HEK293 (cell line): ENCODE measurements at regions of chr19 and their contacts with region 1.

Region 1: DNA sequence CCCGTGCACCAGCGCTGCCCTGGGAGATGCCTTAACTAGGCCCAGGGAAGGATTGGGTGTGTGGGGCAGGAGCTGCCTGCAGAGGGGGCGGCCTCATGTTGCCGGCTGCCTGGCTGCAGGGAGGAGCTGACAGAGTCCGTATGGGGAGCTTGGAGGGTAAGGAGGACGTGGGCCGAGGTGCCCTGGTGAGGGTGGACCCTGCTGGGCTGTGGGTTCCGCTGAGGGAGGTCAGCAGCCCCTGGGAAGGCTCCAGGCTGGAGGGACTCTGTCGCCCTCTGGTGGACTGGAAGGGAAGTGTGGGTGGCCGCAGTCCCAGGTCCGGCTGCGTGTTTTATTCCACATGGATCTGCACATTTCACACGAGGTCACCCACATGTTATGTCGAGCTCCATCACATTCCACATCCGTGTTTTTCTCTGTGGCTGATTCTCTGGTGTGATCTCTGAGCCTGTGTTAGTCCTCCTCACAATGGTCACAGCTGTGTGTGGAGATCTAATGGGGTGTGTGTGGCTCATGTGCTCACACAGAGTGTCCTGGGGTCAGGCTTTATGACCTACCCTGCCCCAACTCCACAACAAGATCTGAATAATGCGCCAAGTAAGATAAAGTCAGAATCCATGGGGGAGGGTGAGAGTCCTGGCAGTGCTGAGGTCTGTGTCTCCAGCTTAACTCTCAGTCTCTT is 1.8 kb upstream of the CEACAM8 start:
- H3K4me3 ChIP-seq: no peak overlapping the region
- H3K27ac ChIP-seq: no peak overlapping the region
- H3K4me1 ChIP-seq: no peaks in the 10 kb centered on the region
- CTCF ChIP-seq: peak; percentile 94

Region 2: GRCh38 chr19:42325273-42325895 is 271.1 kb before region 1 on chr19 and contains the start of gene MEGF8:
- CTCF ChIA-PET with region 1: no interaction called
- POLR2A ChIA-PET with region 1: no interaction called
- H3K4me3 ChIP-seq: peak within 1 kb of the TSS; percentile 67
- H3K27ac ChIP-seq: peak within 1 kb of the TSS; percentile 92
- H3K4me1 ChIP-seq: peaks cover 41% of the 10 kb centered on the region
- CTCF ChIP-seq: peak; percentile 96

Region 3: GRCh38 chr19:42450314-42450934 is 146.1 kb before region 1 on chr19:
- CTCF ChIA-PET with region 1: interaction called, 36 read pairs
- POLR2A ChIA-PET with region 1: no interaction called
- H3K4me3 ChIP-seq: no peak overlapping the region
- H3K27ac ChIP-seq: no peak overlapping the region
- H3K4me1 ChIP-seq: no peaks in the 10 kb centered on the region
- CTCF ChIP-seq: peak; percentile 96

Region 4: GRCh38 chr19:42529248-42529764 is 67.2 kb before region 1 on chr19:
- CTCF ChIA-PET with region 1: interaction called, 27 read pairs
- POLR2A ChIA-PET with region 1: no interaction called
- H3K4me3 ChIP-seq: no peak overlapping the region
- H3K27ac ChIP-seq: no peak overlapping the region
- H3K4me1 ChIP-seq: no peaks in the 10 kb centered on the region
- CTCF ChIP-seq: peak; percentile 91

Region 5: DNA sequence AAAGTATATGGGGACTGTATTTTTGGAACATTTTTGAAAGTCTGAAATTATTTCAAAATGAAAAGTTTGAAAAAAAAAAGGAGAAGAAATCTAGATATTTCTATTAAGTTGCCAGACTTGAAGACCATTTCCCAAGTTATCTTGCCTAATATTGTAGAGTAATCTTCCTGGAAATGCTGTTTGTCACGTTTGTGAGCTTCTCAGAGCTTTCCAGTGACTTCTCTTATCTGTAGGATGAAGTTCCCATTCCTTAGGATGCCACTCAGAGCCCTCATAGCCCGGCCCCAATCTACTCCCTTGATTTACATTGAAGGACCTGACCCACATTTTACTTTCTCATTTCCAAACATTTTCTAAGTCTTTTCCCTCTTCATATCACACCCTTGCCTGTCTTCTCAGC is 25.4 kb before region 1 on chr19:
- CTCF ChIA-PET with region 1: interaction called, 80 read pairs
- POLR2A ChIA-PET with region 1: no interaction called
- H3K4me3 ChIP-seq: no peak overlapping the region
- H3K27ac ChIP-seq: no peak overlapping the region
- H3K4me1 ChIP-seq: no peaks in the 10 kb centered on the region
- CTCF ChIP-seq: no peak

Region 6: DNA sequence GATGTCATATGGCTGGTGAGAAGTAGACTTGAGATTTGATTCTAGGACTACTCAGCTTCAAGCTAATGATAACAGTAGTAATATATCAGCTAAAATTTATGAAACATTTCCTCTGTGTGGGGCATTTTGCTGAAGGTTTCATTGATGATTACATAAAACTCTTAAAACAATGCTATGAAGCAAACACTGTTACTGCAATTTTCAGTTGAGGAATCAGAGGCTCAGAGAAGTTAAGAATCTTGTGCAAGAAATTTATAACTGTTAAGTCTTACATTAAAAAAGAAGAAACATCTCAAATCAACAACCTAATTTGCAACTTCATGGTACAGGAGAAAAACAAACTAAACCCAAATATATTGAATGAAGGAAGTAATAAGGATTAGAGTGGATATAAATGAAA is 12.1 kb before region 1 on chr19:
- CTCF ChIA-PET with region 1: interaction called, 22 read pairs
- POLR2A ChIA-PET with region 1: no interaction called
- H3K4me3 ChIP-seq: no peak overlapping the region
- H3K27ac ChIP-seq: no peak overlapping the region
- H3K4me1 ChIP-seq: no peaks in the 10 kb centered on the region
- CTCF ChIP-seq: no peak

Region 7: GRCh38 chr19:42619271-42619670 is 22.7 kb after region 1 on chr19:
- CTCF ChIA-PET with region 1: interaction called, 22 read pairs
- POLR2A ChIA-PET with region 1: no interaction called
- H3K4me3 ChIP-seq: no peak overlapping the region
- H3K27ac ChIP-seq: no peak overlapping the region
- H3K4me1 ChIP-seq: no peaks in the 10 kb centered on the region
- CTCF ChIP-seq: no peak